MCF 10A (cell line): ENCODE measurements at regions of chr14 and their contacts with region 1.

Region 1: DNA sequence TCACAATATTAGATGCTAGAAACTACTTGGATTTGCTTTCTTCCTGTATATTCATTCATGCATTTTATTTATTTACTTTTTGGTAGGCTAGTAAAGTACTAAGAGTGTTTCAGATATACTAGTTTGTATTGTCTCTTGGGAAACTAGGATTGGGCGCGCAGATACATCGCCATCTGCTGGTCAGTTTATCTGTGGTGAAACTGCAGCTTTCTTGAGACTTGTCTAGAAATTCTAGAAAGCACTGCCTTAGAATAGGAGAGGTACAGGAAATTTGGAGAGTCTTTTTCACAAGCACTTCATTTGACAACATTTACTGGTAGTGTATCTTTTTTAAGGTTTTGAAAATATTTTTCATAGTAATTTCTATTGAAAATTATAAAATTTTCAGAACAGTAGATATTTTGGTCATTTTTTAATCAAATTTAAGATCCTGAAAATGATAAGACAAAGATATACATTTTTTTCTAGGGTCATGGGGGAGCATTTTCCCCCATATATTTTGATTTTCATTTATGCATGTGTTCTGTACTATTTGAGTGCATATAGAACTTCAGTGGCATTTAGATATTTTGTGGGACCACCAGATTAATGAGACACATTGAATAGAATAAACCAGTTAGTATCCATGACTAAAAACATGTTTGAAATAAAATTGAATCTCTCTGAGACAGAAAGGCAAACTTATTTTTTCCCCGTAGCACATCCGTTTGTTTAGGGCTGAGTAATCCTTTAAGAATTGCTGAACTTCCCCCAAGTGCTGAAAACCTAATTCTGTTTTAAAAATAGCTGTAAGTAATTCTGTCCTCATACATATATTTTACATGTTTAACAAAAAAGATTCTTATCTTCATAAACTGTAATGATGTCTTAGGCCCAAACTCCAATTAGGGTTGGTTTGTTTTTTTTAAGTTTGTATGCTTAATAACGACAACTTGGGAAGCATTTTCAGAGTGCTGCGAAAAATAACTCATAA is 44.5 kb downstream of the SLC38A6 start:
- DNase-seq: peak; percentile 77
- H3K4me3 Mint-ChIP-seq: no peak overlapping the region
- H3K27ac Mint-ChIP-seq: no peak overlapping the region
- H3K4me1 Mint-ChIP-seq: peaks cover 5% of the 10 kb centered on the region
- H3K27me3 Mint-ChIP-seq: no peaks in the 10 kb centered on the region
- CTCF ChIP-seq: peak; percentile 76

Region 2: DNA sequence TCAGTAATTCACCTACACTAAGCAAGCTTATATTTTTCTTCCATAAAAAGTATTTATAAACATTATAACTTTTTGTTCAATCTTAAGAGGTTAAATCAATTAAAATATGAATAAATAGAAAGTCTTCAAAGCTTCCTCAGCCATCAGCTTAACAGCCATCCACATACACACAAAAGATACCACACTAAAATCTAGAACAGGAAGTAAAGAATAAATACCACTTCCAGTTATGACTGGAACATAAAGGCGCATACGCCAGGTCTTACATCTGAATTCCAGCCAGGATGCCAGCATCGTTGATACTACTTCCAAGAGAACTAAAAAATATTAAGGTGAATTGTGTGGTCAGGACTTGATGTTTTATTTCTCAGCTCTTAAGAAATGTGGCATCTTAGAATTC is 393.3 kb before region 1 on chr14:
- CTCF ChIA-PET with region 1: interaction called, 27 read pairs
- POLR2A ChIA-PET with region 1: no interaction called
- intact Hi-C with region 1: no loop called
- DNase-seq: no peak
- H3K4me3 Mint-ChIP-seq: no peak overlapping the region
- H3K27ac Mint-ChIP-seq: no peak overlapping the region
- H3K4me1 Mint-ChIP-seq: no peaks in the 10 kb centered on the region
- H3K27me3 Mint-ChIP-seq: no peaks in the 10 kb centered on the region
- CTCF ChIP-seq: no peak

Region 3: GRCh38 chr14:60656686-60657455 is 368.7 kb before region 1 on chr14:
- CTCF ChIA-PET with region 1: no interaction called
- POLR2A ChIA-PET with region 1: no interaction called
- intact Hi-C with region 1: loop called (anchors 1 kb)
- DNase-seq: peak; percentile 33
- H3K4me3 Mint-ChIP-seq: peak overlapping the region; percentile 86
- H3K27ac Mint-ChIP-seq: peak overlapping the region; percentile 94
- H3K4me1 Mint-ChIP-seq: no peaks in the 10 kb centered on the region
- H3K27me3 Mint-ChIP-seq: peaks cover 12% of the 10 kb centered on the region
- CTCF ChIP-seq: peak; percentile 39

Region 4: DNA sequence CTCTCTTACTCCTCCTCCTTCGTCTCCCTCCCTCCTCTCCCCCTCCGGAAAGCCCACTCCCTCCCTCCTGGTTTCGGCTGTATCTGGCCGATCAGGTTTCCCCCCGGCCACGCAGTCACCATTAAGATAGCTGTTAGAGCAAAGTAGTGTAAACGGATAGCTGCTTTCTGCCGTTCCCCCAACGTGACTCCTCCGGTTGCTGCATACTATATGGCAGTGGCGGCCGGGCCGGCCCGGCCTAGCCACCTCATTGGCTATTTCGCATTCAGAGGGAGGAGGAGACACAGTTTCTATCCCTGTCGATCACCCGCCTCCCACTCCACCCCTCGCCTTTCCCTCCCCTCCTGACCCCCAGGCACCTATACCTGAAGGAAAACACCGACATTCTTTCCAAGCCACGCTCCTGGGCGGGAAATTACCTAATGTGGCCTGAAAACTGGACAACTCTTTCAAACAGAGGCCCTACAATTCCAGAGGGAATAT is 301.4 kb before region 1 on chr14 and contains the start of gene SIX4:
- CTCF ChIA-PET with region 1: interaction called, 3 read pairs
- POLR2A ChIA-PET with region 1: interaction called, 3 read pairs
- intact Hi-C with region 1: loop called (anchors 1 kb)
- DNase-seq: peak; percentile 89
- H3K4me3 Mint-ChIP-seq: peak within 1 kb of the TSS; percentile 91
- H3K27ac Mint-ChIP-seq: peak within 1 kb of the TSS; percentile 80
- H3K4me1 Mint-ChIP-seq: no peaks in the 10 kb centered on the region
- H3K27me3 Mint-ChIP-seq: no peaks in the 10 kb centered on the region
- CTCF ChIP-seq: no peak
- total RNA-seq, gene SIX4: 12.9 and 13.6 TPM in 2 replicates

Region 5: GRCh38 chr14:60922050-60922449 is 103.5 kb before region 1 on chr14:
- CTCF ChIA-PET with region 1: no interaction called
- POLR2A ChIA-PET with region 1: no interaction called
- intact Hi-C with region 1: no loop called
- DNase-seq: peak; percentile 26
- H3K4me3 Mint-ChIP-seq: no peak overlapping the region
- H3K27ac Mint-ChIP-seq: no peak overlapping the region
- H3K4me1 Mint-ChIP-seq: peaks cover 7% of the 10 kb centered on the region
- H3K27me3 Mint-ChIP-seq: no peaks in the 10 kb centered on the region
- CTCF ChIP-seq: no peak

Region 6: DNA sequence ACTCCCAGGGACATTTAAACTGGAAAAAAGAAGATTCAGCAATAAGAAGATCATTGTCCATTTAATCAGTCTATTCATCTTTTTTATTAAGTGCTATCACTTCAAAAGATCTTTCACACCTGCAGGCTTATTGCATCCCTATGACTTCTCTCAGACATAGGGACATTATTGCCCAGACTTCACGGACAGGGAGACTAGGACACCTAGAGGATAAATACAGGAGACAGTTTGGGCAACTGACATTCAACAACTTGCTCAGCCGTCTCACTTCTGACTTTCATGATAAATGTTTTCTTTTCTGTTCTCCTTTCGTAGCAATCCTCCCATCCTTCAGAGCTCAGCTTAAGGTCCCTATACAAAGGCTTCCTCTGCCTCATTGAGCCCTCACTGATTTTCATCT is 171.3 kb after region 1 on chr14:
- CTCF ChIA-PET with region 1: interaction called, 4 read pairs
- POLR2A ChIA-PET with region 1: no interaction called
- intact Hi-C with region 1: loop called (anchors 1 kb)
- DNase-seq: peak; percentile 59
- H3K4me3 Mint-ChIP-seq: no peak overlapping the region
- H3K27ac Mint-ChIP-seq: no peak overlapping the region
- H3K4me1 Mint-ChIP-seq: no peaks in the 10 kb centered on the region
- H3K27me3 Mint-ChIP-seq: no peaks in the 10 kb centered on the region
- CTCF ChIP-seq: peak; percentile 40

Region 7: DNA sequence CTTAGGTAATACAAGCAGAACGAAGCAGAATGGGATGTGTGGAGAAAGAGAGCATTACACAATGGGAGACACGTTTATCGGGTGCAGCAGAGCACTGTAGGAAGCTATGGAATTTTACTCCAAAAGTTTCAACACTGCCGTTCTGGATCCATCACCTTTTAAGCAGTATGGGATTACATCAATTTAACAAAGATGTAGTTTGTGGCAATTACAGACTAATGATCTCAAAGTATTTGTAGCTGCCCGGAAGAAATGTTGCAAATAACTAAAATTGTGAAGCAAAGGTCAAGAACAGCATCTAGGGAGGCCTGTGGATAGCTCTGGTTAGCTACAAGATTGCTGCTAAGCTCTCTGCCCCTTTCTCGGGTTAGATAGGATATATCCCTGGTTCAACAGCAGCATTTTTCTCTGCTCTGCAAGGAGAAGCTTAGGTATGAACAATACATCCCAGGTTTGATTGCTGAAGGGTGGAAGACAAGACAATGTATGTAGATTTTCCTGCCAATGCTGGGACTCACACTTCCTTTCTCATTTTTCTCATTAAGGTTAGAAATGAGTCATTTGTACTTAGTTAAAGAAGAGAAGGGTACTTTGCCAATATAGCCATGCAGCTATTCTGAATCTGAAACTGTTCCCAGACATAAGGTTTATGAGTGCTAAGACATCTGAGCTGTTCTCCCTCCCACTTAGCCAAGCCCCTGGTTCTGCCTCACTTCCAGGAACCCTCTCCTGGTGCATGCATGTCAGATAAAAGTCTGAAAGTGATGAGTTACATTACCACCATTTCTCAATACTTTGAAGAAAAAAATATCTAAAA is 594.8 kb after region 1 on chr14:
- CTCF ChIA-PET with region 1: no interaction called
- POLR2A ChIA-PET with region 1: no interaction called
- intact Hi-C with region 1: no loop called
- DNase-seq: peak; percentile 90
- H3K4me3 Mint-ChIP-seq: no peak overlapping the region
- H3K27ac Mint-ChIP-seq: peak overlapping the region; percentile 69
- H3K4me1 Mint-ChIP-seq: peaks cover 30% of the 10 kb centered on the region
- H3K27me3 Mint-ChIP-seq: no peaks in the 10 kb centered on the region
- CTCF ChIP-seq: no peak